Breast epithelium (tissue), 4 donors: ENCODE measurements at regions of chr12 and their contacts with region 1.

Region 1: GRCh38 chr12:117921929-117922777 is 46.6 kb downstream of the KSR2 start:
- DNase-seq: no peak
- H3K4me3 ChIP-seq: no peak overlapping the region
- H3K27ac ChIP-seq: no peak overlapping the region
- H3K4me1 ChIP-seq: no peaks in the 10 kb centered on the region
- H3K27me3 ChIP-seq: no peaks in the 10 kb centered on the region
- CTCF ChIP-seq: no peak
- POLR2A ChIP-seq: no peak

Region 2: GRCh38 chr12:118574288-118574687 is 652.1 kb after region 1 on chr12:
- intact Hi-C with region 1: no loop called
- DNase-seq: no peak
- H3K4me3 ChIP-seq: no peak overlapping the region
- H3K27ac ChIP-seq: no peak overlapping the region
- H3K4me1 ChIP-seq: no peaks in the 10 kb centered on the region
- H3K27me3 ChIP-seq: no peaks in the 10 kb centered on the region
- CTCF ChIP-seq: no peak
- POLR2A ChIP-seq: no peak

Region 3: DNA sequence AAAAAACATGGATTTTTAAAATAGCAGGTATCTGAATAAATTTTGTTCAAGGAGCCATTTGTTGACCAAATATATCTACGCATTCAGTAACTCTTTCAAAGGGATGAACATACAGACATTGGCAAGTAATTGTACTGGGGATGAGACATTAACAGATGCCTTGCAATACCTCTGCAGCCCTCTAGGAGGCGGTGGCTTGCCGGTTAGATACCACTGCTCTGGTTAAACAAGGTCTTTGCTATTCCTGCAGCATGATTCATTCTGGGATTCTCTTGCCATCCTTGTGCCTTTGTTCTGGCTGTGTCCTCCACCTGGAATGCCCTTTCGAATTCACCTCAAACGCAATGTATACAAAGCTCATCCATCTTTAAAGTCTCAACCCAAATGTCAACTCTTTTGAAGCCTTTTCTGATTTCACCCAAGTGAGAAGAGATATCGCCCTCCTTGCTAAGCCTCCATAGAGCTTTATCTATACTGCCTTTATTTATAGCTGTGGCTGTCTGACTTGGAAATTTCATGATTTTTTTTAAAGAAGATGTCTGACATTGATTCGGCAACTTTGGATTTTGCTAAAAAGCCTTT is 928.2 kb after region 1 on chr12:
- intact Hi-C with region 1: loop called (anchors 5 kb)
- DNase-seq: no peak
- H3K4me3 ChIP-seq: no peak overlapping the region
- H3K27ac ChIP-seq: no peak overlapping the region
- H3K4me1 ChIP-seq: no peaks in the 10 kb centered on the region
- H3K27me3 ChIP-seq: peaks cover 0 to 20% of the 10 kb centered on the region in 2 donors
- CTCF ChIP-seq: peak in 1 of 3 donors; percentile 18
- POLR2A ChIP-seq: no peak

Region 4: GRCh38 chr12:118946256-118946655 is 1024.1 kb after region 1 on chr12:
- intact Hi-C with region 1: no loop called
- DNase-seq: no peak
- H3K4me3 ChIP-seq: no peak overlapping the region
- H3K27ac ChIP-seq: no peak overlapping the region
- H3K4me1 ChIP-seq: no peaks in the 10 kb centered on the region
- H3K27me3 ChIP-seq: peaks cover 0 to 19% of the 10 kb centered on the region in 2 donors
- CTCF ChIP-seq: no peak
- POLR2A ChIP-seq: no peak